ENCODE measurements at regions of chr5 and their contacts with region 1.

Region 1: DNA sequence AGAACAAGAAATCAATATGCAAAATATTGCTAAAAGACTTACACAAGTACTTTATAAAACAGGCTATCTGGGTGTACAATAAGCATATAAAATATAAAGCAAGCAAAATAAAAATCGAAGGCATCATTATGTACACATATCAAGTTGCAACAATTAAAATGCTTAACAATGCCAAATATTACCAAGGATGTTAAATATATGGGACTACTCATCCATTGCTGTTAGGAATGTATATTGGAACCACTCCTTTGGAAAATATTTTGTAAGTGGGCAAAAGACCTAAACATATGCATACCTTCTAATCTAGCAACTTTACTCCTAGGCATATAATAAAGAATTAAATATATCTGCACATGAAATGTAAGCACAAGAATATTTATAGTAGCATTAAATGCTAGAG is 632.6 kb upstream of the COX7C start:
- DNase-seq: no peak
- ATAC-seq: no peak
- H3K4me3 ChIP-seq: no peak overlapping the region
- H3K27ac ChIP-seq: no peak overlapping the region
- H3K4me1 ChIP-seq: no peaks in the 10 kb centered on the region
- H3K27me3 ChIP-seq: no peaks in the 10 kb centered on the region
- CTCF ChIP-seq: no peak

Region 2: DNA sequence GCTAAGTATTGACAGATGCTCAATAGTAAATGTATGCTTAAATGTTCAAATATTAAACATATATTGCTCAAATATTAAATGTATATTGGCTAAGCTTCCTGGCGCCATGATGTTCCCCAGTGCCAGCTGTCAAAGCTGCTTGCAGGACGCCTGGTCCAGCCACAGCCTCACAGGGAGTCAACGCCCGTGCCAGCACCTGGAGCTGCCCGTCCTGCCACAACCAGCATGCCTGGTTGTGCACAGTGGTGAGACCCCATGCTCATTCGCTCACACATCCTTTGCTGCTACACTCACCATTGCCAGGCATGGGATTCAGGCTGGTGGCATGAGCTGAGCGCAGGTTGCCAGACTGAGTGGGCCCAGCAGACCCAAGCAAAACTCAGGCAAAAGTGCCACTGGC is 673.6 kb before region 1 on chr5:
- CTCF ChIA-PET with region 1: no interaction called
- POLR2A ChIA-PET with region 1: interaction called, 11 read pairs
- in situ Hi-C with region 1: no loop called
- intact Hi-C with region 1: no loop called
- DNase-seq: no peak
- ATAC-seq: no peak
- H3K4me3 ChIP-seq: no peak overlapping the region
- H3K27ac ChIP-seq: no peak overlapping the region
- H3K4me1 ChIP-seq: no peaks in the 10 kb centered on the region
- H3K27me3 ChIP-seq: no peaks in the 10 kb centered on the region
- CTCF ChIP-seq: no peak

Region 3: DNA sequence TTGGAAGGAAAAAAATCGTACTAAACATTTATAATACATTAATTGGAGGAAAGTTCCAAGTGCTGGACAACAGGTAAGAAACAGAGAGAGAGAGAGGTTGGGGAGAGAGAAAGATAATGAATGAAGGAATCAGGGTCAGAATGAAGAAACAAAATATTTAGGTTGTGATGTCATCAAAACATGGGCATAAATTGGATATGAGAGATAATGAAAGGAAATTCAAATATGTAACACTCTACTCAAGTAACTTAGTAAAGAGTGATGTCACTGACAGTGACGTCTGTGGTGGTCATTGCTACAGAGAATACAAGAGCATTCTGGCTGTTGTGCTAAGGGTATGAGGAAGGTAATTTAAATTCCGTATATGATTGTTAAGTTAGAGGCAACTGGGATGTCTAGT is 89.1 kb after region 1 on chr5:
- CTCF ChIA-PET with region 1: no interaction called
- POLR2A ChIA-PET with region 1: no interaction called
- in situ Hi-C with region 1: no loop called
- intact Hi-C with region 1: no loop called
- DNase-seq: no peak
- ATAC-seq: no peak
- H3K4me3 ChIP-seq: no peak overlapping the region
- H3K27ac ChIP-seq: no peak overlapping the region
- H3K4me1 ChIP-seq: no peaks in the 10 kb centered on the region
- H3K27me3 ChIP-seq: no peaks in the 10 kb centered on the region
- CTCF ChIP-seq: no peak